Activated CD4-positive, alpha-beta T cell treated with anti-CD3 and anti-CD28 coated beads, Interleukin-2, amount 10 ng/mL, durations not matched to agents 7 days and 5 days (primary cell): ENCODE measurements at regions of chr16 and their contacts with region 1.

Region 1: GRCh38 chr16:88737298-88738150 is 31.2 kb downstream of the CTU2 start:
- DNase-seq: peak; percentile 78
- H3K4me3 Mint-ChIP-seq: no peak overlapping the region
- H3K27ac Mint-ChIP-seq: no peak overlapping the region
- H3K4me1 Mint-ChIP-seq: no peaks in the 10 kb centered on the region
- H3K27me3 Mint-ChIP-seq: no peaks in the 10 kb centered on the region

Region 2: GRCh38 chr16:88331989-88332920 is 405.3 kb before region 1 on chr16:
- CTCF ChIA-PET with region 1: no interaction called
- POLR2A ChIA-PET with region 1: no interaction called
- DNase-seq: no peak
- H3K4me3 Mint-ChIP-seq: no peak overlapping the region
- H3K27ac Mint-ChIP-seq: no peak overlapping the region
- H3K4me1 Mint-ChIP-seq: peaks cover 4% of the 10 kb centered on the region
- H3K27me3 Mint-ChIP-seq: no peaks in the 10 kb centered on the region

Region 3: DNA sequence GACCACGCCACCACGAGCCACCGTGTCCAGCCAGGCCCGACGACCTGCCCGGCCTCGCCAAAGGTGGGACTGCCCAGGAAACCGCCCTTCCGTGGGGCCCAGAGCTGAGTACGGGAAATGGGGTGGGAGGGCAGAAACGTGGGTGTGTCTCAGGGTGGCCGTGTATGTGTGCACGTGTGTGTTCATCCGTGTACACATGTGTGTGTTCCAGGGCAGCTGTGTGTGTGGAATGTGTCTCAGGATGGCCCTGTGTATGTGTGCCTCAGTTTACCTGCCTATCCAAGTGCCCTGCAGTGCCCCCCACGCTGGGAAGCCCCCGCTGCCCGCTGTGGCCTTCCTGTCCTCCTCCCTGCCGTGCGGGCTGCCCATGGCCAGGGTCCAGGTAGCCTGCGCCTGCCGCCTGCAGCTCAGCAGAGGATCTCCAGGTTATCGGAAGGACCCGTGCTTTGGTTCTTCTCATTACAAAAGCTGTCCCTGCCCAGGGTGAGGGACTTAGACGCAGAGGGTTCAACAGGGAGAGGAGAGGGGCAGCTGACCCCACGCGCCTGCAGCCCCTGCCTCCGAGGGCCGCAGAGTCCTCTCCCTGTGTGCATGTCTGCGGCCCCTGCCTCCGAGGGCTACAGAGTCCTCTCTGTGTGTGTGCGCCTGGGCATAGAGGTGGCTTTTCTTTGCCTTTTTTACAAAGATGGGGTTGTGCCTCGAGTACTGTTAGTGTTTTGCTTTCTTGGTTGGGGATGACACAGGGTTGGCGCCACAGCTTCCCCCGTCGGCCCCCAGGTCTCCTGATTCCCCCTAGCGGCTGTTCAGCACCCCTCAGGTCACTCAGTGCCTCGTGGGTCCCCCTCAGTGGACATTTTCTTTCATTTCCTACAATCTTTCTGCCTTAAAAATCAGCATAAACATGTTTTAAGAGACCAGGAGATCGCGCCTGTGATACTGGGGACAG is 331.2 kb before region 1 on chr16:
- CTCF ChIA-PET with region 1: no interaction called
- POLR2A ChIA-PET with region 1: no interaction called
- DNase-seq: no peak
- H3K4me3 Mint-ChIP-seq: no peak overlapping the region
- H3K27ac Mint-ChIP-seq: no peak overlapping the region
- H3K4me1 Mint-ChIP-seq: peaks cover 8% of the 10 kb centered on the region
- H3K27me3 Mint-ChIP-seq: no peaks in the 10 kb centered on the region

Region 4: DNA sequence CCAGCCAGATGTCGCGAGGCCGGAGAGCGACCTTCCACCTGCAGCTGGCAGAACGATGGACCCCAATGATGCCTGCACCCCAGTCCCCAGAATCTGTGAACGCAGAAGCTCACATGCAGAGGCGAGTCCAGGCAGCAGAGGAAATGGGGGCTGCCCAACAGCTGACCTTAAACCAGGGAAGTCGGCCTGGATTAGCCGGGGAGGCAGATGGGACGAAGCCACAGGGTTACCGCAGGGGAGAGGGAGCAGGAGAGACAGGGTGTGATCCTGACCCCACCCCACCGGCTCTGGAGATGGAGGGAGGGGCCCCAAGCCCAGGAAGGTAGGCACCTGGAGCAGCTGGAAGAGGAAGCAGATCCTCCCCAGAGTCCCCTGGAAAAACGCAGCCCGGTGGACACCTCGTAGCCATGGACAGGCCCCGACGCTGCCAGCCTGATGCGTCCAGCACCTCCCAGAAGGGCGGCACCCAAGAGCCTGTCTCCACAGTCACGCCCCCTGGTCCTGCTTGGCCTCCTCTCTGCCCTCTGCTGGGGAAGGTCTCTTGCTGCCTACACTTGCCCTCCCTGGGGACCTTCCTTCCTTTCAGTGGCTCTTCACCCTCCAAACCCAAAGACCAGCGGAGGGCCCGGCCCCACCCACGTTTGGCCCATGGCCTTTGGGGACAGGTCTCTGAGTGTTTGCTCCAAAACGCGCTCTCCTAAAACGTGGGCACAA is 10.2 kb after region 1 on chr16:
- CTCF ChIA-PET with region 1: interaction called, 27 read pairs
- POLR2A ChIA-PET with region 1: no interaction called
- DNase-seq: peak; percentile 52
- H3K4me3 Mint-ChIP-seq: no peak overlapping the region
- H3K27ac Mint-ChIP-seq: peak overlapping the region; percentile 25
- H3K4me1 Mint-ChIP-seq: peaks cover 36% of the 10 kb centered on the region
- H3K27me3 Mint-ChIP-seq: no peaks in the 10 kb centered on the region

Region 5: GRCh38 chr16:88763502-88764053 is 26.1 kb after region 1 on chr16:
- CTCF ChIA-PET with region 1: interaction called, 15 read pairs
- POLR2A ChIA-PET with region 1: no interaction called
- DNase-seq: no peak
- H3K4me3 Mint-ChIP-seq: no peak overlapping the region
- H3K27ac Mint-ChIP-seq: no peak overlapping the region
- H3K4me1 Mint-ChIP-seq: peaks cover 30% of the 10 kb centered on the region
- H3K27me3 Mint-ChIP-seq: no peaks in the 10 kb centered on the region

Region 6: DNA sequence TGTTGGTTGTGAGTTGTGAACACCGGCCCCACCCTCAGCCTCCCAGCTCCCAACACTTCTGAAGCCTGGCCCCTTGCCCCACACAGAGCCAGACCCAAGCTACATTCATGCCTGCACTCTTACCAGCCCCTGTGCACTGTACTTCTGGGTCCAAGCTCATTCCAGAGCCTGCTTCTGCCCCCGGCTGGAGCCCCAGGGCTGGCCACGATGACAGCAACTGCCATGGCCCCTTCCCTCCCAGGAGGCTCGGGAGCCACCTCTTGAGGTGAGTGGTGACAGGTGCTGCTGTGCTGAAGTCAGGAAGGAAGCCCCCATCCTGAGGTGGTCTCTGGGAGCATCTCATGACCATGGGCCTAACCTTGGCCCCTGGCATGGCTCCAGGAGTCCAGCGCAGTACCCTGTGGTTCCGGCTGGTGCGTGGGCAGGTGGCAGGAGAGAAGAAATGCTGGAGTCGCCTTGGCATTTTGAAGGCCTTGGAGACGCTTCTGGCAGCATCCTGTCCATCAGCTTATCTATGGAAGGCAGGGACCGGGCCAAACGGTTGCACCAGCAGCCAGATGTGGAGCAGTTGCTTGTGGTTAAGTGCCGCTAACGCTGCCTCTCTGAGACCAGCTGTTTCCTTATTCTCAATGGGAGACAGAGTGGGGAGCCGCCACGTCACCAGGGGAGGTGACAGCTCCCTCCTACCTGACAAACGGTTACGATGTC is 62.2 kb after region 1 on chr16:
- CTCF ChIA-PET with region 1: interaction called, 13 read pairs
- POLR2A ChIA-PET with region 1: no interaction called
- DNase-seq: peak; percentile 57
- H3K4me3 Mint-ChIP-seq: no peak overlapping the region
- H3K27ac Mint-ChIP-seq: peak overlapping the region; percentile 25
- H3K4me1 Mint-ChIP-seq: peaks cover 41% of the 10 kb centered on the region
- H3K27me3 Mint-ChIP-seq: no peaks in the 10 kb centered on the region

Region 7: DNA sequence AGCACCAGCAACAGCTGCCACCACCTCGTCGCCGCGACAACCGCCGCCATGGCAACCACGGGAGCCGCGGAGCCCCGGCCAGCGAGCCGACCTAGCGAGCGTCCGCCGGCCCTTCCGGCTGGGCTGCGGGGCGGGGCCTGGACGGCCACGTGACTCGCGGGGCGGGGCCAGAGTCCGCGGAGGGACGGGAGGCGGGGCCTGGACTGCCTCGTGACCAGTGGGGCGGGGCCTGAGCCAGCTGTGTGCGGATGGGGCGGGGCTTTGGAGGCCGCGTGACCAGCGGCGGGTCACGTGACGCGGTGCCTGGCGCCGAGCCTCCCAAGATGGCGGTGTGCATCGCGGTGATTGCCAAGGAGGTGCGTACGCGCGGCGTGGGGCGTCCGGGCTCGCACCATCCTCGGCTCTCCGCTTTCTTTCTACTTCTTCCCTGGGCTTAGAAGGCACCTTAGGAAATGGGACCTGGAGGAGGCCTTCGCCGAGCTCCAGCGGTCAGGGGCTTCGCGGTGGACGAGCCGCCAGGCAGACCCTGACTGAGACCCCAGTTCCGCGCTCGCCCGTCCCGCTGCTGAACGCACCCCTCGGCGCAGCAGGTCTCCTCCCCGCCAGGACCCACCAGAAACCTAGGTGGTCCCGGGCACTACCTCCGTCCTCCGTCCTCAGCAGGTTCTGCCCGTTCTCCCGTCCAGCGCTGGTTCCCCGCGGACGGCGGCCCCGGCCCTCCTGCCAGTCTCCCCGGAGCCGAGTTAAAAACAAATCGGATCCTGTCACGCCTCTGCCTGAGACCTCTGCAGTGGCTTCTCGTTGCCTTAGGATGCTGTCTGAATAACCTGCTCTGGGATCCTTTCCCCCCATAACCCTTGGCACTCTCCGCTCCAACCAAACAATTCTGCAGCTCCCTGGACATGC is 119.6 kb after region 1 on chr16 and contains the starts of genes GALNS and TRAPPC2L:
- CTCF ChIA-PET with region 1: interaction called, 11 read pairs
- POLR2A ChIA-PET with region 1: no interaction called
- DNase-seq: peak; percentile 99
- H3K4me3 Mint-ChIP-seq: peak within 1 kb of the TSS; percentile 97
- H3K27ac Mint-ChIP-seq: peak within 1 kb of the TSS; percentile 93
- H3K4me1 Mint-ChIP-seq: peaks cover 32% of the 10 kb centered on the region
- H3K27me3 Mint-ChIP-seq: no peaks in the 10 kb centered on the region
- total RNA-seq, gene GALNS: 29.4 to 35.7 TPM
- total RNA-seq, gene TRAPPC2L: 47.7 to 55.7 TPM